ENCODE measurements at regions of chr3 and their contacts with region 1.

Region 1: GRCh38 chr3:57227204-57227929 is at the start of gene APPL1:
- DNase-seq: peak; percentile 78 to 97
- H3K4me3 ChIP-seq: peak within 1 kb of the TSS; percentile 66
- H3K27ac ChIP-seq: peak within 1 kb of the TSS; percentile 57
- H3K4me1 ChIP-seq: peaks cover 27% of the 10 kb centered on the region
- H3K27me3 ChIP-seq: no peaks in the 10 kb centered on the region
- CTCF ChIP-seq: no peak
- total RNA-seq, gene APPL1: 24.2 and 34.1 TPM in 2 replicates

Region 2: GRCh38 chr3:57100046-57100695 is 127.2 kb before region 1 on chr3:
- CTCF ChIA-PET with region 1: no interaction called
- POLR2A ChIA-PET with region 1: no interaction called
- intact Hi-C with region 1: loop called (anchors 10 kb)
- DNase-seq: peak; percentile 48 to 63
- H3K4me3 ChIP-seq: no peak overlapping the region
- H3K27ac ChIP-seq: 0 out of 2 replicates have a peak overlapping the region, but pooled peaks have one; percentile 62
- H3K4me1 ChIP-seq: peaks cover 20% of the 10 kb centered on the region
- H3K27me3 ChIP-seq: no peaks in the 10 kb centered on the region
- CTCF ChIP-seq: peak; percentile 85

Region 3: GRCh38 chr3:57464801-57465200 is 237.4 kb after region 1 on chr3:
- CTCF ChIA-PET with region 1: interaction called, 10 read pairs
- POLR2A ChIA-PET with region 1: no interaction called
- intact Hi-C with region 1: no loop called
- DNase-seq: no peak
- H3K4me3 ChIP-seq: no peak overlapping the region
- H3K27ac ChIP-seq: no peak overlapping the region
- H3K4me1 ChIP-seq: no peaks in the 10 kb centered on the region
- H3K27me3 ChIP-seq: no peaks in the 10 kb centered on the region
- CTCF ChIP-seq: no peak